ENCODE measurements at regions of chr1 and their contacts with region 1.

Region 1: DNA sequence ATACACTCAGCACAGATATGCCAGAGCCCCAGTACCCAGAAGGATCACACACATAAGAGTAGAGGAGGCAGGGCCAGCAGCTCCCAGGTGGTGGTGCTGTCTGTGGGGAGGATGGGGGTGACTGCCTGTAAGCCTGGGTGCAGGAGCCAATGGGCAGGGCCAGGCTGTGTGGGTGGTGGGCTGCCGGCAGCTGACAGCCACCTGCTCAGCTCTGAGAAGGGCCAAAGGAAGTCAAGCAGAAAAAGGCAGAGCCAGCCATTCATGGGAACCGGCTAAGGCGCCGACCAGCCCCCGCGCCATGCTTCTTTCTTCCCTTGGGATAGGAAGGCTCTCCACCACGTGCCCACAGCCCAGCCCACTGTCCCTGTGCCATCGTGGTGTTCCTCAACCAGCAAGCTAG is 14.1 kb downstream of the PIK3C2B start:
- DNase-seq: peak; percentile 72
- CTCF ChIP-seq: no peak

Region 2: GRCh38 chr1:204278254-204278653 is 202.3 kb before region 1 on chr1:
- CTCF ChIA-PET with region 1: no interaction called
- POLR2A ChIA-PET with region 1: no interaction called
- DNase-seq: no peak
- CTCF ChIP-seq: no peak

Region 3: GRCh38 chr1:204348722-204349121 is 131.8 kb before region 1 on chr1:
- CTCF ChIA-PET with region 1: no interaction called
- POLR2A ChIA-PET with region 1: no interaction called
- DNase-seq: no peak
- CTCF ChIP-seq: no peak

Region 4: DNA sequence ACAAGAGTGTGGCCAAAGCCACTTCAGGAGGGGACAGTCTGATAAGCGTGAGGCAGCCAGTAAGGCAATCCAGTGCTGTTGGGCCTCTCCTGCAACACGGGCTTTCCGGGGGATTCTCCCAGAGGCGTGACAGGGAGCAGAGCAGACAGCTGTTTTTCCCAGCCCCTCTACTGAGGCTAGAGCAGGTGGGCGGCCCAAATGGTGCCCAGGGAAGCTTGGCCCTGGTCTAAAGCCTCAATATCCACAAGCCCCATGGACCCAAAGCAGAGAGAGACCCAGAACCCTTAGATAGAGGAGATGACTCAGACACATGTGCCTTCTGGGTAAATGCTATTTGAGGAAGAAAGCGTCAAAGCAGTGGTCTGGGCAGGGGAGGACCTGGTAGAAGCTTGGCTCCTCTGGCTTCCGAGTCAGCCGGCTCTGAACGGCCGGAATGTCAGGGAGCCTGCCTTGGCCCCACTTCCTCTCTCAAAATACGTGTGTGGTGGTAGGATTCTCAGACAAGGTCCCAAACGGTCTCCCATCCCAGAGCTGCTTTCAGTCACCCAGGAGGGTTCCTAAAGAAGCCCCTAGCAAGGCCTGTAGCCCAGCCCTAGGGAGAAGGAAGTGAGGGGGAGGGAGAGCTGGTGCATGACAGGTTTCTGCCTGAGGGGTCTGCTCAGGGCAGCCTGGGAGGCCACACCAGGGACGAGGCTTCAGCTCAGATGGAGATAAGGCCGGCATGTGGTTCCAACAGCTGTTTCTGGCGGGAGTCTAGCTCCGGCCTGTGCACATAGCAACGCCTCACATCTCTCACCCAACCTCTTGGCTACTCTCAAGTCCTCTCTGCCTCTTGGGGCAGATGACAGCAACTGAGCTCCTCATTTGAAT is 14.7 kb before region 1 on chr1:
- CTCF ChIA-PET with region 1: interaction called, 1,775 read pairs
- POLR2A ChIA-PET with region 1: interaction called, 5 read pairs
- DNase-seq: peak; percentile 80
- CTCF ChIP-seq: no peak

Region 5: DNA sequence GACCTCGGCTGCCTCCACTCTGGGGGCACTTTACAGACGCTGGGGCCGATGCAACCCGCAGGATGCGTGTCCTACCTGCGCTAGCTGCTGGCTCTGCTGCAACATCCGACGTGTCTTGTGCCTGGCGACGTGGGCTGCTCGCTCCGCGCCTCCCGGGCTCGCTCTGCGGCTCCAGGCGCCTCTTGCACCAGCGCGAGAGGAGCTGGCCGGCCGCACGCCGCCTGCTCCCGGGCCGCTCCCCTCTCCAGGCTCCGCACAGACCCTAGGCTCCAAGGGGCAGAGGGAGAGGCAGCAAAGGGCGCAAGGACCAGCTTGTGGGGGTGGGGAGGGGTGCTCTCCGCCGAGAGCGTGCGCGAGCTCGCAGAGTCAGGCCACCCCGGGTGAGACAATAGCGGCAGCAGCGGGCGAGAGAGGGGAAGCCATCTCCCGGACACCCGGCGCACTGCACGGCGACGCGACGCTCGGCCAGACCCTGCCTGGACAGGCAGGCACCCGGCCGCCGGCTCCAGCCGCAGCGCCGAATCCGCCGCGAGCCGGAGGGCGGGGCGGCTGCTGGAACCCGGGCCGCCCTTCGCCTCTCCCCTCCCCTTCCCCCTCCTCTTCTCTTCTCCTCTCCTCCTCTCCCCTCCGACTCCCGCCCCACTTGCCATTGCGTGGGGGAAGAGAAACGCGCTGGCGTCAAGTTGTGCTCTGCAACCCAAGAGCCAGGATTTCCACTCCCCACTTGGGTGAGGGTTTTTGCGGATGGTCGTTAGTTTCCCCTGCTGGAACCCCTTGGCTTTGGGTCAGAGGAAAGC is 14.0 kb after region 1 on chr1 and contains the start of gene PIK3C2B:
- CTCF ChIA-PET with region 1: interaction called, 60 read pairs
- POLR2A ChIA-PET with region 1: interaction called, 10 read pairs
- DNase-seq: peak; percentile 90
- CTCF ChIP-seq: peak; percentile 47

Measured in GM10248 (cell line).